ENCODE measurements at regions of chr5 and their contacts with region 1.

Region 1: DNA sequence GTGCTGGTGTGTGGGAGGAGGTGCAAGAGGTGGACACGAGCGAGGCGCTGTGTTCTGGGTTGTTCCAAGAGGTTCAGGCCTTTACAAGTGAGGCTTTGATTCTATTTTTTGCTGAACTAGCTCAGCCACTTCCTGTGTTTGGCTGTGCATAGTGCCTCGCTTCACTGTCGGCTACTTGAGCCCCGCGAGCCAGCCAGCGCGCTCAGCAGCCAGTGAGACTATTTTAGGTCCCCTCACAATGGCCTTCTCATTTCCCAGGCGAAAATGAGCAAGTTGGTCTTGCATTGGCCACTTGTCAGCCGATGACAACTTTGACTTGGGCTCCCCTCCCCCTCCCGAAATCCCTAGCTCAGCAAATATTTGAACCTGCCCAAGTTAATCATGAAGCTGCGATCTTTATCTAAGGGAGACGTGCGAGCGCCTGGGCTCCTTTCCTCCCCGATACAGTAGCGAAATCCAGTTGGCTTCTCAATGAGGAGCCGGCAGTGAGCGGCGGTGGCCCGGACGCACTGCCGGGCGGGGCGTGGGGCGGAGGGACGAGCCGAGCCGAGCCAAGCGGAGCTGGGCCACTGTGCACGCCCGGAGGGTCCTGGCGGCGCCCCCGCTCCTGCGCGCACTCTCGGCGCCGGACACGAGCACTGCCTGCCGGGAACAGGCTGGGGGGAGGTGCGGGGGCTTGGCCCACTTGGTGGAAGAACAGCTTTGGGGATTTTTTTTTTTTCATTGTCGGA is 72.6 kb downstream of the PIK3R1 start:
- DNase-seq: peak in 2 of 3 donors; percentile 57 to 68
- H3K4me3 ChIP-seq: peak overlapping the region; percentile 35 to 89 (median 60)
- H3K27ac ChIP-seq: peak overlapping the region in 1 of 2 experiments; percentile 59
- H3K4me1 ChIP-seq: peaks cover 13 to 30% (median 24%) of the 10 kb centered on the region in 4 experiments
- H3K27me3 ChIP-seq: no peaks in the 10 kb centered on the region

Region 2: GRCh38 chr5:68460147-68460798 is 172.1 kb after region 1 on chr5:
- CTCF ChIA-PET with region 1: interaction called, 81 read pairs
- POLR2A ChIA-PET with region 1: no interaction called
- DNase-seq: peak; percentile 79 to 91 (median 88)
- H3K4me3 ChIP-seq: no peak overlapping the region
- H3K27ac ChIP-seq: no peak overlapping the region
- H3K4me1 ChIP-seq: peaks cover 3 to 10% (median 7%) of the 10 kb centered on the region in 4 experiments
- H3K27me3 ChIP-seq: no peaks in the 10 kb centered on the region

Measured in common myeloid progenitor, CD34-positive (primary cell).